Heart left ventricle (tissue), 16 donors: ENCODE measurements at regions of chr7 and their contacts with region 1.

Region 1: DNA sequence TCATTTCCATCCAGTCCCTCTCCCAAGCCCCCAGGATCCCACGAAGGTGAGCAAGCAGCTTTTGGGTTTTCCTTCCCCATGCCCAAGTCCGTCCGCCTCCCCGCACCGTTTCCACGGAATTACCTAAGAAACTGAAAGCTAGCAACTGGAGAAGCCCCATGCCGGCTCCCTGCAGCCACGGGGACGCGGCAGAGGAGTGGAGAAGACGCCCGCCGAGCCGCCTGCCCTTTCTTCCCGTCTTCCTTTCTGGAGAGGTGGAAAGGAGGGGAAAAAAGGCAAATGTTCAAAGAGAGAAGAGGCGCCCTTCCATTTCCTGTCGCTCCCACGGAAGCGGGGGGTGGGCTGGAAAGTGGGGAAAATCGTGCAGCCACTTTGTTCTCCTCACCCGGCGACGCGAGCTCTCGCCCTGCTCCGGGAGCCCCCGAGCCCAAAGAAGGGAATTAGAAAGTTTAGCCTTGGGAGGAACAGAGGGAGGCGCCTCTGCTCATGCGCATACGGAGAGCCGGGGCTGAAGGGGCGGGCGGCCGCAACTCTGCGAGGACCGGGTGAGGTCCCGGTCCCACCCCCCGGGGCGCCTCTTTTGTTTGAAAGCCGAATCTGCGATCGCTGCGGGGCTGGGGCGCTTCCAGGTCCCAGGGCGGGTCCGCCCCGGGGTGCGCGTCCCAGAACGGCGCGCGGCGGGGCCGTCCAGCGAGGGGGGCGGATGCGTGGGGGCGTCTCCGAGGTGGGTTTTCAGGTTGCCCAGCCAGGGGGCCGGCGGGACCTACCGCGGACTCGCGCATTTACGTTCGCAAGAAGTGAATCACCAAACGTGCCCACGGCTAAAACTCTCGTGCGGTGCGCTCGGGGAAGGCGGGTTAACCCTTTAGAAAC is at the start of gene LAMB1:
- DNase-seq: peak; percentile 78 to 84 (median 83)
- ATAC-seq: peak; percentile 32 to 85 (median 78)
- H3K4me3 ChIP-seq: peak within 1 kb of the TSS; percentile 63 to 91 (median 72)
- H3K27ac ChIP-seq: peak within 1 kb of the TSS; percentile 52 to 92 (median 86)
- H3K4me1 ChIP-seq: peaks cover 0 to 53% (median 35%) of the 10 kb centered on the region in 12 donors
- H3K27me3 ChIP-seq: peaks cover 0 to 36% (median 0%) of the 10 kb centered on the region in 9 donors
- CTCF ChIP-seq: no peak
- POLR2A ChIP-seq: peak in 1 of 2 donors; percentile 59
- total RNA-seq, gene LAMB1: 29.1 to 121 (median 58.0) TPM

Region 2: DNA sequence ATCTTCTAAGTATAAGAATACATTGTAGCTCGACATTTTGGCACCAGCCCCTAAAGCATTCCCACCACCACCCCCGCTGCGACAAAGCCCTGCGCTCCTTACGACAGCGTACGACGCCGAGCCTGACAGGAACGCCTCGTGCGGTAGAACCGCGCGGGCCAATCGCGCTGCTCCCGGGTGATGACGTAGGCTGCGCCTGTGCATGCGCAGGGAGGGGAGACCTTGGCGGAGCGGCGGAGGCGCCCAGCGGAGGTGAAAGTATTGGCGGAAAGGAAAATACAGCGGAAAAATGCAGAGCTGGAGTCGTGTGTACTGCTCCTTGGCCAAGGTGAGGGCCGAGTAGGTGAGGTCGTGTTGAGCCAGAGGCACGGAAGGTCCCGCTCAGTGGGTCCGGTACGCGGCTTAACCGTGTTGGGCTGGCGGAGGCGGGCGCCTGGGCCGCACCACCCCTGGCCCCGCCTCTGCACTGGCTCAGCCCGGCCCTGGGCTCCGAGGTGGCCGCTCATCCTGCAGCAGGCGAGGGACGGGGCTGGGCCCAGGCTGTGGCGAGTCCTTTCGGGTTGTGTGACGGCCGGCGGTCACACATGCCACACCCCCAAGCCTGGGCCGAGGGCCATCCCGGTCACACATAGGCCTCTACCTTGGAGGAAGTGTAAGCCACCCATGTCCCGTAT is 111.9 kb before region 1 on chr7 and contains the start of gene DLD:
- intact Hi-C with region 1: loop called in 2 of 10 experiments (anchors 10 kb)
- DNase-seq: peak; percentile 95 to 97 (median 97)
- ATAC-seq: peak; percentile 98 to 99 (median 99)
- H3K4me3 ChIP-seq: peak within 1 kb of the TSS; percentile 40 to 94 (median 76)
- H3K27ac ChIP-seq: peak within 1 kb of the TSS; percentile 91 to 99 (median 96)
- H3K4me1 ChIP-seq: peaks cover 7 to 50% (median 38%) of the 10 kb centered on the region in 12 donors
- H3K27me3 ChIP-seq: no peaks in the 10 kb centered on the region
- CTCF ChIP-seq: peak in 1 of 12 donors; percentile 15
- POLR2A ChIP-seq: peak in 1 of 2 donors; percentile 92
- total RNA-seq, gene DLD: 154 to 426 (median 287) TPM

Region 3: GRCh38 chr7:107939573-107940489 is 63.1 kb before region 1 on chr7:
- intact Hi-C with region 1: no loop called
- DNase-seq: peak; percentile 58 to 73 (median 63)
- ATAC-seq: peak; percentile 27 to 67 (median 58)
- H3K4me3 ChIP-seq: no peak overlapping the region
- H3K27ac ChIP-seq: peak overlapping the region in 11 of 12 donors; percentile 31 to 85 (median 65)
- H3K4me1 ChIP-seq: peaks cover 0 to 70% (median 48%) of the 10 kb centered on the region in 12 donors
- H3K27me3 ChIP-seq: no peaks in the 10 kb centered on the region
- CTCF ChIP-seq: no peak
- POLR2A ChIP-seq: no peak

Region 4: GRCh38 chr7:107961405-107961804 is 41.6 kb before region 1 on chr7:
- intact Hi-C with region 1: loop called in 3 of 10 experiments (anchors 5 kb)
- DNase-seq: peak; percentile 42 to 84 (median 68)
- ATAC-seq: peak; percentile 44 to 69 (median 60)
- H3K4me3 ChIP-seq: no peak overlapping the region
- H3K27ac ChIP-seq: peak overlapping the region in 9 of 12 donors; percentile 4 to 68 (median 40)
- H3K4me1 ChIP-seq: peaks cover 0 to 41% (median 17%) of the 10 kb centered on the region in 12 donors
- H3K27me3 ChIP-seq: no peaks in the 10 kb centered on the region
- CTCF ChIP-seq: no peak
- POLR2A ChIP-seq: no peak

Region 5: DNA sequence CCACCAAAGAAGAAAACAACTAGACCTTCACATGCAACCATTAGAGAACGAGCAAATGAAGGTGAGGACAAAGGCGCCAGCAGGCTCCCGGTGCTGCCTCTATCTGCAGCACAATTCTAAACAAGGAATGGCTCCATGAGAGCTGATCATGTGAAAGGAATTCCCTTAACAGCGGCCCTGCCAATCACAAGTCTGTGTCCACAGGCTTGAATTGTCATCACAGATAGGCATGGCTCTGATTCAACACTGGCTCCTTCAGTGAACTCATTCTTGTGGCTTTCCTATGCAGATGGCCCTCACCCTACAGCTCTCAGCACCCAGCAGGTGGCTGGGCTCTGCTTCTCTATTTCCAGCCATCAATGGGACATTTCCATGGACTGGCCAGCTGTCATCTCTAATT is 36.3 kb before region 1 on chr7:
- intact Hi-C with region 1: loop called in 3 of 10 experiments (anchors 5 kb)
- DNase-seq: peak in 4 of 5 donors; percentile 64 to 75 (median 72)
- ATAC-seq: peak; percentile 82 to 93 (median 88)
- H3K4me3 ChIP-seq: no peak overlapping the region
- H3K27ac ChIP-seq: peak overlapping the region; percentile 6 to 84 (median 66)
- H3K4me1 ChIP-seq: peaks cover 0 to 56% (median 38%) of the 10 kb centered on the region in 12 donors
- H3K27me3 ChIP-seq: no peaks in the 10 kb centered on the region
- CTCF ChIP-seq: peak in 7 of 12 donors; percentile 7 to 43 (median 36)
- POLR2A ChIP-seq: no peak

Region 6: GRCh38 chr7:107972075-107972482 is 30.9 kb before region 1 on chr7:
- intact Hi-C with region 1: loop called in 2 of 10 experiments (anchors 1 to 5 kb)
- DNase-seq: peak in 2 of 5 donors; percentile 38 to 62
- ATAC-seq: peak; percentile 78 to 90 (median 85)
- H3K4me3 ChIP-seq: no peak overlapping the region
- H3K27ac ChIP-seq: peak overlapping the region; percentile 37 to 92 (median 72)
- H3K4me1 ChIP-seq: peaks cover 0 to 74% (median 52%) of the 10 kb centered on the region in 12 donors
- H3K27me3 ChIP-seq: no peaks in the 10 kb centered on the region
- CTCF ChIP-seq: no peak
- POLR2A ChIP-seq: no peak

Region 7: GRCh38 chr7:108094933-108095710 is 92.2 kb after region 1 on chr7:
- intact Hi-C with region 1: loop called in 4 of 10 experiments (anchors 1 to 10 kb)
- DNase-seq: peak in 2 of 5 donors; percentile 25 to 52
- ATAC-seq: peak; percentile 49 to 88 (median 80)
- H3K4me3 ChIP-seq: peak overlapping the region in 3 of 12 donors; percentile 14 to 20 (median 14)
- H3K27ac ChIP-seq: peak overlapping the region; percentile 10 to 73 (median 50)
- H3K4me1 ChIP-seq: peaks cover 0 to 33% (median 22%) of the 10 kb centered on the region in 12 donors
- H3K27me3 ChIP-seq: no peaks in the 10 kb centered on the region
- CTCF ChIP-seq: no peak
- POLR2A ChIP-seq: no peak